Breast epithelium (tissue), 4 donors: ENCODE measurements at regions of chr3 and their contacts with region 1.

Region 1: GRCh38 chr3:194682694-194683310 is 2.9 kb upstream of the FAM43A start:
- DNase-seq: peak; percentile 75 to 89
- H3K4me3 ChIP-seq: no peak overlapping the region
- H3K27ac ChIP-seq: peak overlapping the region; percentile 57 to 62
- H3K4me1 ChIP-seq: peaks cover 0 to 5% of the 10 kb centered on the region in 2 donors
- H3K27me3 ChIP-seq: no peaks in the 10 kb centered on the region
- CTCF ChIP-seq: peak; percentile 76 to 99 (median 96)
- POLR2A ChIP-seq: no peak

Region 2: DNA sequence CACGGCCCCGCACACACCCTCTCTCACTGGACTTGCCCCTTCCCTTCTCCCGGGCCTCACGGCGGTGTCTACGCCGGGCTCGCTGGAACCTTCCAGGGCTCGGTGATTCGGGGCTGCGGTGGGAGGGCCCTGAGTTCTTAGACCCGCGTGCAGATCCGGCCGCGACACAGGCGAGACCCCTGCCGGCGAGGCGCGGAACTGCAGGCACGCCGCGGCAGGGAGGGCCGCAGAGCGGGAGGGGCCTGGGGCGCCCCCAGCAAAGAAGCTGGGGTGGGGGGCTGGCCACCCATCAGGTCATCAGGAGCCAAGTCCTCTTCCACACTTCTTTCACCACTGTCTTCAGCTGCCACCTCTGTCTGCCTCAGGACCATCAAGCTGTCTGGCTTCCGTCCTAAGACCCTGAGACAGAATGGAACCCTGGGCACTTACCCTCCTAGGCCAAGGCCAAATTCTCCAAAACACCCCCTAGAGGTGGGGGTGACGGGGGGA is 423.7 kb after region 1 on chr3:
- intact Hi-C with region 1: loop called (anchors 10 kb)
- DNase-seq: peak; percentile 33 to 65
- H3K4me3 ChIP-seq: peak overlapping the region in 2 of 3 donors; percentile 20 to 51
- H3K27ac ChIP-seq: no peak overlapping the region
- H3K4me1 ChIP-seq: no peaks in the 10 kb centered on the region
- H3K27me3 ChIP-seq: no peaks in the 10 kb centered on the region
- CTCF ChIP-seq: peak; percentile 96 to 99 (median 98)
- POLR2A ChIP-seq: no peak

Region 3: DNA sequence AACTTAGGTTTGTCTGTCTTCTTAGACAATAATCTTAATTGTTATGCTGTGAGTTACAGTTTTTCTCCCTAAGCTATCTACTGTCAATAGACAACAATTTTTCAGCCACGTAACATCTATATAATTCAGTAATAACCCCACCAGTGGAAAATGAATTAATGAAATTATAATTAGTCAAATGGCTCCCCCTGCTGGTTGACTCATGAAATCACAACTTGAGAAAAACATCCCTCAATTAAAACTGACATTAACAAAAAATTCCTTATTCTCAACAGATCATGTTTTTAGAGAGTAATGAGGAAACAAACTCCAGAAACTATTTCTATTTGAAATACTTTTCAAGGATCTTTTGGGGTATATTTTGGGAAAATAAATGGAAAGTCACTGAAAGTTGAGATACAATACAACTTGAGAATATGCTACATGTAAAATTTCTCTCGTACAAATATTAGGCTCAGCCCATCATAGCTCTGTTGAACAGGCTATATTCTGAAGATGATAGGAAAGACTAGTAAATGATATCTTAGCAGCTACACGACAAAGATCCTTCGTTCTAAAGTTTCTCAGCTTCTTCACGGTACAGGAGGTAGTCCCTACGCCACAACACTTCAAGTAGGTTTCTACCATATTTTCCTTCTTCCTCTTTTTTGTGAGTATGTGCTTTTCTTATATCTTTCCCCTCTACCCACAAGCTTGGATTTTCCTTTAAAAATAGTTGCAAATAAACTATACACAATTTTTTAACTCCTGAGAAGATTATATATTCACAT is 839.6 kb after region 1 on chr3:
- intact Hi-C with region 1: loop called (anchors 10 kb)
- DNase-seq: no peak
- H3K4me3 ChIP-seq: no peak overlapping the region
- H3K27ac ChIP-seq: no peak overlapping the region
- H3K4me1 ChIP-seq: no peaks in the 10 kb centered on the region
- H3K27me3 ChIP-seq: no peaks in the 10 kb centered on the region
- CTCF ChIP-seq: peak; percentile 81 to 88 (median 81)
- POLR2A ChIP-seq: no peak